Esophagus muscularis mucosa (tissue), 4 donors: ENCODE measurements at regions of chr11 and their contacts with region 1.

Region 1: GRCh38 chr11:113896156-113896879 is 8.3 kb upstream of the HTR3B start:
- DNase-seq: no peak
- H3K4me3 ChIP-seq: no peak overlapping the region
- H3K27ac ChIP-seq: no peak overlapping the region
- H3K4me1 ChIP-seq: peaks cover 0 to 5% (median 0%) of the 10 kb centered on the region in 4 donors
- H3K27me3 ChIP-seq: no peaks in the 10 kb centered on the region
- CTCF ChIP-seq: peak; percentile 53 to 89 (median 72)
- EP300 ChIP-seq: no peak
- POLR2A ChIP-seq: no peak

Region 2: GRCh38 chr11:114036156-114036811 is 140.0 kb after region 1 on chr11:
- intact Hi-C with region 1: loop called (anchors 10 kb)
- DNase-seq: peak; percentile 95
- H3K4me3 ChIP-seq: peak overlapping the region; percentile 49 to 53 (median 52)
- H3K27ac ChIP-seq: peak overlapping the region; percentile 58 to 70 (median 66)
- H3K4me1 ChIP-seq: peaks cover 9 to 26% (median 25%) of the 10 kb centered on the region in 4 donors
- H3K27me3 ChIP-seq: peaks cover 0 to 10% (median 0%) of the 10 kb centered on the region in 4 donors
- CTCF ChIP-seq: peak; percentile 82 to 90 (median 88)
- EP300 ChIP-seq: no peak
- POLR2A ChIP-seq: no peak